Activated T-helper 2 cell treated with anti-CD3 and anti-CD28 coated beads, Interferon-gamma antibody, Interleukin-2, Interleukin-4, amounts not matched to agents 10 μg/mL and 5 μg/mL and 100 μg/mL, durations not matched to agents 14 hours and 24 hours and 36 hours (primary cell): ENCODE measurements at regions of chr19 and their contacts with region 1.

Region 1: GRCh38 chr19:38335949-38336637 is 463 bp downstream of the CATSPERG start:
- DNase-seq: peak; percentile 95
- H3K4me3 Mint-ChIP-seq: peak overlapping the region; percentile 95
- H3K27ac Mint-ChIP-seq: peak overlapping the region; percentile 100
- H3K4me1 Mint-ChIP-seq: peaks cover 7% of the 10 kb centered on the region
- H3K27me3 Mint-ChIP-seq: no peaks in the 10 kb centered on the region

Region 2: DNA sequence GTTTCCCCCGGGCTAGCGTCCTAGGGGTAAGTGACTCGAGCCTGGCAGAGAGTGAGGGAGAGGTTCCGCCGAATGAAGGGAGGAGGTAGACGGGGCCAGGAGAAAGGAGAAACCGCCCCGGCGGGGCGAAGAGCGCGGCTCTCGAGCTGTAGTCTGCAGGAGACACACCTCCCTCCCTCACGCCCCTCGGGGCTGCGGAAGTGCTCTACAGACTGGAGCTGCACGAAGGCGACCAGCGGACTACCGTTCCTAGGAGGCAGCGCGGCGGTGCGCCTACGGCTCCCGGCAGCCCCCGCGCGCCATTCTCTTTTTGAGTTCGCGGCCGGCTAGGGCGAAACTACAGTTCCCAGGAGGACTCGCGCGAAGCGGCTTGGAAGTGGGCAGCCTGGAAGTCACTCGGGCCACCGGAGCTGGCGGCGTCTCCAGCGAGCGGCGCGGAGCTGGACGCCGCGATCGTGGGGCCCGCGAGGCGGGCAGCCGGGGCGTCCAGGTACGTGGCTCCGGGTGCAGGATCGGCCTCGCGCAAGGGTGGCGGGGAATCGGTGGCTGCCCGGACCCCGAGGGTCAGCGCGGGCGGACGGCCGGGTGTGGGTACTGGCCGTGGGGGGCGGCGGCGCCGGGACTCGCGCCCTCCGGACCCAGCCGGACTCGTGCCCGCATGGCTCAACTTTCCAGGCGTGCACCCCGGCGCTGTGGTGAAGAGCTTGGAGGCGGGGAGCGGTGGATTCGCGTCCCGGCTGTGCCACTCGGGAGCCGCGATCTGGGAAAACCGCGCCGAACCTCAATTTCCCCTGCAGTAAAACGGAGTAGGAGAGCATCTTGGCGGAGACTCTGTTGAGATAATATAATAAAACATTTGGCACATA is 429.0 kb before region 1 on chr19 and contains the start of gene SIPA1L3:
- intact Hi-C with region 1: loop called (anchors 2 kb)
- DNase-seq: peak; percentile 92
- H3K4me3 Mint-ChIP-seq: peak within 1 kb of the TSS; percentile 83
- H3K27ac Mint-ChIP-seq: peak within 1 kb of the TSS; percentile 60
- H3K4me1 Mint-ChIP-seq: peaks cover 17% of the 10 kb centered on the region
- H3K27me3 Mint-ChIP-seq: peaks cover 4% of the 10 kb centered on the region
- total RNA-seq, gene SIPA1L3: 15.6 and 15.9 TPM in 2 replicates

Region 3: DNA sequence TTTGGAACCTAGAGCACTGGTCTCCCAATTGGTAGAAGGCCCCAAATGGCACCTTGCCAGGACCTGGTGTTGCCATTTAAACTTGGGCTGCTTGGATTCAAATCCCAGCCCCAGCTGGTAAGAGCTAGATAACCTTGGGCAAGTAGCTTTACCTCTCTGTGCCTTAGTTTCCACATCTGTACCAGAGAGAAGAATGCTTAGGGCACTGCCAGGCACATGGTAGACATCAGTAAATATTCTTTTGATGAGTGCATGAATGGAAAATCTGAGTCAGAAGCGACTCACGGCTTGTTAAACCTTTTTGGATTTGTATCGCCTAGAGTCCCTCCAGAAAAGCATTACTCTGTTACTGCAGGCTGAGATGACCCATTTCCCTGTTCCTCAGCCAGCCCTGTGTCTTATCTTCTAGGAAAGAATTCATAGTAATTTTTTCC is 338.2 kb before region 1 on chr19:
- intact Hi-C with region 1: no loop called
- DNase-seq: no peak
- H3K4me3 Mint-ChIP-seq: no peak overlapping the region
- H3K27ac Mint-ChIP-seq: no peak overlapping the region
- H3K4me1 Mint-ChIP-seq: no peaks in the 10 kb centered on the region
- H3K27me3 Mint-ChIP-seq: no peaks in the 10 kb centered on the region

Region 4: DNA sequence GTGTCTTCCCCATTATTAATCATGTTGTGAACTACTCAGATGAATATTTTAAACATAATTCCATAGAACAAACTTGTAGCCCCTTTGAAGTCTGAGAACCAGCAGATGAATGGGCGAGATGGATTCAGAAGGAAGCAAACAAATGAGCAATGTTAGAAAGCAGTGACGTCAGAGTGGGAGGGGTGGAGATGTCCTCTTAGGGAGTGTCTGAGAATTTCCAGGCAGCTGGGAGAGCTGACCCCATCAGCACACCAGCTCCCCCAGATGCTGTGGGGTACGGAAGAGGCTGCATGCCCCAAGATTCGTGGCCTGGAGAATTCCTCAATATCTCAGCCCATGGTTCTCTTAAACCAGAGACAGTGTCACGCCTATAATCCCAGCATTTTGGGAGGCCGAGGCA is 180.6 kb before region 1 on chr19:
- intact Hi-C with region 1: no loop called
- DNase-seq: no peak
- H3K4me3 Mint-ChIP-seq: no peak overlapping the region
- H3K27ac Mint-ChIP-seq: no peak overlapping the region
- H3K4me1 Mint-ChIP-seq: no peaks in the 10 kb centered on the region
- H3K27me3 Mint-ChIP-seq: no peaks in the 10 kb centered on the region

Region 5: GRCh38 chr19:38245826-38246498 is 90.1 kb before region 1 on chr19:
- intact Hi-C with region 1: loop called (anchors 1 kb)
- DNase-seq: no peak
- H3K4me3 Mint-ChIP-seq: no peak overlapping the region
- H3K27ac Mint-ChIP-seq: no peak overlapping the region
- H3K4me1 Mint-ChIP-seq: peaks cover 10% of the 10 kb centered on the region
- H3K27me3 Mint-ChIP-seq: no peaks in the 10 kb centered on the region

Region 6: GRCh38 chr19:38315657-38316476 is 20.2 kb before region 1 on chr19 and contains the start of gene YIF1B:
- intact Hi-C with region 1: loop called (anchors 1 kb)
- DNase-seq: peak; percentile 94
- H3K4me3 Mint-ChIP-seq: peak within 1 kb of the TSS; percentile 93
- H3K27ac Mint-ChIP-seq: peak within 1 kb of the TSS; percentile 90
- H3K4me1 Mint-ChIP-seq: peaks cover 41% of the 10 kb centered on the region
- H3K27me3 Mint-ChIP-seq: no peaks in the 10 kb centered on the region
- total RNA-seq, gene YIF1B: 106 and 114 TPM in 2 replicates

Region 7: DNA sequence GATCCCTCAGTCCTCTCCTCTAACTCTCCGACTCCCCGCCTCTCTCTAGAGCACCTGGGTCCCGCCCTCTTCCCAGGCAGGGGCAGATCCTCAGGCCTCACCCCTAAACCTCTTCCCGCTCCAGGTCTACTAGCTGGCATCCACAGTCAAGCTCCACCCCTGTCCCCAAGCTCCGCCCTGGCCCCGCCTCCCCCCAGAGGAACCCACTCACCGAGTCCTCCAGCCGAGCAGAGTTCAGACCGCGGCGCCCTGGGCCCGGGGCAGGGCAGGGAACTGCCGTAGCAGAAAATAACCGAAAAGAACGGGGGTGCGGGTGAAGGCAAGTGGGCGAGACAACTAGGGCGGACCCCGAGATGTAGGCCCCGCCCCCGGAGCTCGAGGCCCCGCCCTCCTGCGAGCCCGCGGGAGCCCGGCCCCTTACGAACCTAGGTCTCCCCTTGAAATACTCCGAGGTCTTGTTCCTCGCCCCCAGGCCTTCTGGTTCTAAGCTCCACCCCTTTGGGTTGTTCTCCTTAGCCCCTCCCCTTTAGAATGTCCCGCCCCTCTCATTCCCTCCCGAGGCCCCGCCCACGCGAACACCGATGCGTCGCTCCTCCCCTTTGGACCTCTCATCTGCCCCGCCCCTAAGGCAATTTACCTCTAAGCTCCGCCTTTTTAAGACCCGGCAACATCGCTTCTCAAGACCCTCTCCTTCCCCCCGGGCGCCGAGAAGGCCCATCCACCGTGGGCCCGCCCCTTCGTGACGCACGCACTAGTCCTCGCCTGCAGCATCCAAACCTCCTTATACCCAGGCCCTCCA is 51.7 kb after region 1 on chr19 and contains the start of gene GGN:
- intact Hi-C with region 1: loop called (anchors 1 kb)
- DNase-seq: peak; percentile 77
- H3K4me3 Mint-ChIP-seq: peak within 1 kb of the TSS; percentile 85
- H3K27ac Mint-ChIP-seq: peak within 1 kb of the TSS; percentile 54
- H3K4me1 Mint-ChIP-seq: peaks cover 11% of the 10 kb centered on the region
- H3K27me3 Mint-ChIP-seq: peaks cover 21% of the 10 kb centered on the region
- total RNA-seq, gene GGN: 0.71 TPM in 1 of 2 replicates, not detected in the other